HepG2 (cell line): ENCODE measurements at regions of chr10 and their contacts with region 1.

Region 1: GRCh38 chr10:58919927-58920654 is 256.4 kb upstream of the PHYHIPL start:
- DNase-seq: peak; percentile 12
- ATAC-seq: no peak
- H3K4me3 ChIP-seq: no peak overlapping the region
- H3K27ac ChIP-seq: no peak overlapping the region
- H3K4me1 ChIP-seq: no peaks in the 10 kb centered on the region
- H3K27me3 ChIP-seq: 0 out of 5 replicates have a peak, but pooled peaks cover 0 to 6% of the 10 kb centered on the region in 2 experiments
- CTCF ChIP-seq: no peak
- EP300 ChIP-seq: no peak
- POLR2A ChIP-seq: no peak
- RAD21 ChIP-seq: no peak

Region 2: GRCh38 chr10:58833771-58834561 is 86.1 kb before region 1 on chr10:
- CTCF ChIA-PET with region 1: no interaction called
- POLR2A ChIA-PET with region 1: no interaction called
- in situ Hi-C with region 1: no loop called
- intact Hi-C with region 1: no loop called
- DNase-seq: no peak
- ATAC-seq: no peak
- H3K4me3 ChIP-seq: no peak overlapping the region
- H3K27ac ChIP-seq: no peak overlapping the region
- H3K4me1 ChIP-seq: no peaks in the 10 kb centered on the region
- H3K27me3 ChIP-seq: no peaks in the 10 kb centered on the region; a peak in 1 of 5 replicates
- CTCF ChIP-seq: no peak
- EP300 ChIP-seq: no peak
- POLR2A ChIP-seq: no peak
- RAD21 ChIP-seq: no peak

Region 3: DNA sequence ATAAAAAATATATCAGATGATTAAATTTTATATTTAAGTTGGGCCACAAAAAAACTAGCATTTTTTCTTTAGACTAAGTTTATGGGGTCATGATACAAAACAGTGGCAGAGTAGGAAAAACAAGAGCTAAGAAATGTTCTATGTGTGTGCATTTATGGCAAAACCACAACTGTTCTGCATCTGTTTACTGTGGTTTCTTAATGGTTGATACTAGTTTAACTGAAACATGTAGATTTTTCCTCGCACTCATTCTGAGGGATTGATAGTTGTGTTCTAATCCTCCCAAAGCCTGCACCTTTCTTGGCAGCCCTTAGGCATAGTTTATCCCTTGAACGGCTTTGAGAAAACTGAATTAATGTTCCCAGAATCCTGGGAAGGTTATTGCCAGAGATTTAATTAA is 189.7 kb after region 1 on chr10:
- CTCF ChIA-PET with region 1: no interaction called
- POLR2A ChIA-PET with region 1: no interaction called
- in situ Hi-C with region 1: no loop called
- intact Hi-C with region 1: no loop called
- DNase-seq: no peak
- ATAC-seq: no peak
- H3K4me3 ChIP-seq: no peak overlapping the region
- H3K27ac ChIP-seq: peak overlapping the region; percentile 69
- H3K4me1 ChIP-seq: peaks cover 68% of the 10 kb centered on the region
- H3K27me3 ChIP-seq: no peaks in the 10 kb centered on the region
- CTCF ChIP-seq: no peak
- EP300 ChIP-seq: no peak
- POLR2A ChIP-seq: no peak
- RAD21 ChIP-seq: no peak

Region 4: DNA sequence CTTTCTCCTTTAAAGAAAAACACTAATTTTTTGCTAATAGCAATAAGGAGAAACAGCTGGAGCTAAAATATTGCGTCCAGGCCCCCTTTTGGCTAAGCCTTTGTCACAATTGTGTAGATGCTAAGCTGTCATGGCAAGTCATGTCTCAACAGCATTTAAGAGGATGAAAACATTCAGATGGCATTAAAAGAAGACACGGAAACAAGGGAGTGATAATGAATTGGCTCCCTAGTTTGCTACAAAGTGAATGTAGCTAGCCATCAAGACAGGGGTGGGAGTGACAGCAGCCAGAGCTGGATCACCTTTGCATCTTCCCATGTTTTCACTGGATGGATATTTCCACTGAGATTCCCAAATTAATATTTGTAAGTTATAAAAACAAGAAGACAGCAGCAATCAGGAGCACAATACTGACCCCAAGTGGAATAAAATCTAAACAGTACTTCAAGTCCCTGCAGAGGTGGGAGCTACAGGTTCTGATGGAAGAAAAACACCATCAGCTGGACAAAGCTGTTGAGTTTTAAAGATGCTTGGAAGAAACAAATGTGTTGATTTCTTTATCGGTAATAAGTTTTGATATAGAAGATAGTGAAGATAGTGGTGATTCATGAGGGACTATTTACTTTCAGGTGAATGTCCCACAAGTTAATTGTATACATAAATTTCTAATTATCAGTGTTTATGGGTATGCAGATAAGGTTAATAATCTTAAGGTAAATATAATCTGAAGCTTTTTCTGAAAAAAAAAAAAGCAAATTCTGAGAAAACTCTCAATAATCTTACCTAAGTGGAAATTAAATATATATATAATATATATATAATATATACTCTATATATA is 660.2 kb after region 1 on chr10:
- CTCF ChIA-PET with region 1: no interaction called
- POLR2A ChIA-PET with region 1: no interaction called
- in situ Hi-C with region 1: loop called (anchors 25 kb)
- intact Hi-C with region 1: no loop called
- DNase-seq: peak; percentile 3
- ATAC-seq: no peak
- H3K4me3 ChIP-seq: no peak overlapping the region
- H3K27ac ChIP-seq: no peak overlapping the region
- H3K4me1 ChIP-seq: no peaks in the 10 kb centered on the region
- H3K27me3 ChIP-seq: no peaks in the 10 kb centered on the region; a peak in 2 of 5 replicates
- CTCF ChIP-seq: peak; percentile 44
- EP300 ChIP-seq: no peak
- POLR2A ChIP-seq: no peak
- RAD21 ChIP-seq: no peak